ENCODE measurements at regions of chr17 and their contacts with region 1.

Region 1: GRCh38 chr17:81512560-81513371 is at the start of gene ACTG1:
- DNase-seq: peak; percentile 93
- H3K4me3 ChIP-seq: peak within 1 kb of the TSS; percentile 89 to 97
- H3K27ac ChIP-seq: peak within 1 kb of the TSS; percentile 100
- H3K4me1 ChIP-seq: peaks cover 5% of the 10 kb centered on the region
- H3K27me3 ChIP-seq: no peaks in the 10 kb centered on the region
- CTCF ChIP-seq: no peak
- POLR2A ChIP-seq: peak; percentile 93
- total RNA-seq, gene ACTG1: 2,438 to 3,181 TPM

Region 2: GRCh38 chr17:81471804-81472456 is 40.8 kb before region 1 on chr17:
- intact Hi-C with region 1: no loop called
- DNase-seq: peak; percentile 42
- H3K4me3 ChIP-seq: no peak overlapping the region
- H3K27ac ChIP-seq: no peak overlapping the region
- H3K4me1 ChIP-seq: no peaks in the 10 kb centered on the region
- H3K27me3 ChIP-seq: no peaks in the 10 kb centered on the region
- CTCF ChIP-seq: peak in 2 of 4 experiments; percentile 42 to 59
- POLR2A ChIP-seq: no peak

Region 3: GRCh38 chr17:81566461-81567126 is 53.8 kb after region 1 on chr17:
- intact Hi-C with region 1: loop called (anchors 5 kb)
- DNase-seq: peak; percentile 81
- H3K4me3 ChIP-seq: peak overlapping the region in 1 of 2 donors; percentile 12
- H3K27ac ChIP-seq: peak overlapping the region; percentile 66 to 74
- H3K4me1 ChIP-seq: peaks cover 20% of the 10 kb centered on the region
- H3K27me3 ChIP-seq: no peaks in the 10 kb centered on the region
- CTCF ChIP-seq: no peak
- POLR2A ChIP-seq: no peak